ENCODE measurements at regions of chr7 and their contacts with region 1.

Region 1: DNA sequence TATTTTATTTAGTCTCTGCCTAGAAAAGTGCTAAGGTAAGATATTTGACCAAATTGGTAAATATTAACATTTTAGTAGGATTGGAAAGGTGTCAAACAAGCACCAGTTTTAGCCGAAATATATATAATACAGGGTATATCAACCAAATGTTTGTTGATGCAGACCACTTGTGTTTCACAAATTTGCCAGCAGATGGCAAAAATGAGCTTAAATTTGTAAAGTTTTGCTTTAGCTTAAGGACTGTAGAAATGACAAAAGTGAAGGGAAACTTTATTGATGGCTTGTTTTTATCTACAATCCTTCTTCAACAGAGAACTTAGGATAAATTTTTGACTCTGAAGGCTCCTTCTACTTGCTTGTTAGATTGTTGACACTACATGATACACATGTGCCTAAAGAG is 4.8 kb upstream of the POLR1F start:
- DNase-seq: peak; percentile 2
- H3K4me3 ChIP-seq: no peak overlapping the region
- CTCF ChIP-seq: peak; percentile 23

Region 2: GRCh38 chr7:19681596-19681995 is 32.1 kb before region 1 on chr7:
- CTCF ChIA-PET with region 1: no interaction called
- POLR2A ChIA-PET with region 1: no interaction called
- DNase-seq: no peak
- H3K4me3 ChIP-seq: no peak overlapping the region
- CTCF ChIP-seq: no peak

Region 3: GRCh38 chr7:19698331-19698730 is 15.3 kb before region 1 on chr7:
- CTCF ChIA-PET with region 1: interaction called, 31 read pairs
- POLR2A ChIA-PET with region 1: interaction called, 4 read pairs
- DNase-seq: no peak
- H3K4me3 ChIP-seq: no peak overlapping the region
- CTCF ChIP-seq: no peak

Region 4: GRCh38 chr7:19725770-19726169 is 12.1 kb after region 1 on chr7:
- CTCF ChIA-PET with region 1: interaction called, 30 read pairs
- POLR2A ChIA-PET with region 1: no interaction called
- DNase-seq: no peak
- H3K4me3 ChIP-seq: no peak overlapping the region
- CTCF ChIP-seq: no peak

Region 5: GRCh38 chr7:19747740-19748339 is 34.2 kb after region 1 on chr7:
- CTCF ChIA-PET with region 1: interaction called, 10 read pairs
- POLR2A ChIA-PET with region 1: no interaction called
- DNase-seq: no peak
- H3K4me3 ChIP-seq: no peak overlapping the region
- CTCF ChIP-seq: peak; percentile 29